ENCODE measurements at regions of chr1 and their contacts with region 1.

Region 1: GRCh38 chr1:28581536-28582247 is 10.4 kb upstream of the RAB42 start:
- H3K4me3 ChIP-seq: peak overlapping the region; percentile 74
- H3K27ac ChIP-seq: peak overlapping the region; percentile 79
- H3K4me1 ChIP-seq: no peaks in the 10 kb centered on the region; the same call in 1 of the 2 replicates
- CTCF ChIP-seq: peak; percentile 81

Region 2: GRCh38 chr1:28248283-28249012 is 333.2 kb before region 1 on chr1:
- CTCF ChIA-PET with region 1: interaction called, 10 read pairs
- POLR2A ChIA-PET with region 1: interaction called, 20 read pairs
- H3K4me3 ChIP-seq: peak overlapping the region; percentile 13
- H3K27ac ChIP-seq: peak overlapping the region; percentile 44
- H3K4me1 ChIP-seq: peaks cover 12% of the 10 kb centered on the region; the same call in 1 of the 2 replicates
- CTCF ChIP-seq: peak; percentile 63

Region 3: GRCh38 chr1:28470146-28470545 is 111.5 kb before region 1 on chr1:
- CTCF ChIA-PET with region 1: interaction called, 3 read pairs
- POLR2A ChIA-PET with region 1: interaction called, 10 read pairs
- H3K4me3 ChIP-seq: no peak overlapping the region
- H3K27ac ChIP-seq: no peak overlapping the region
- H3K4me1 ChIP-seq: no peaks in the 10 kb centered on the region
- CTCF ChIP-seq: no peak

Region 4: DNA sequence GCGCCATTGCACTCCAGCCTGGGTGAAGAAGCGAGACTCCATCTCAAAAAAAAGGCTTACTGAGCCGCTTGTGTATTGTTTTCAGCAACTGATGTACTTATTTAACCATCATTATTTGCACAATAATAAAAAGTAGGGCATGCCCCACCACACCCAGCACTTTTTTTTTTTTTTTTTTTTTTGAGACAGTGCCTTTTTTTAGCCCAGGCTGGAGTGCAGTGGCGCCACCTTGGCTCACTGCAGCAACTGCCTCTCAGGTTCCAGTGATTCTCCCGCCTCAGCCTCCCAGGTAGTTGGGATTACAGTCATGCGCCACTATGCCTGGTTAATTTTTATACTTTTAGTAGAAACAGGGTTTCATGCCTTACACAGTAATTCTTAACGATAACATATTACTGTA is 41.0 kb before region 1 on chr1:
- CTCF ChIA-PET with region 1: interaction called, 5 read pairs
- POLR2A ChIA-PET with region 1: interaction called, 11 read pairs
- H3K4me3 ChIP-seq: no peak overlapping the region
- H3K27ac ChIP-seq: no peak overlapping the region
- H3K4me1 ChIP-seq: no peaks in the 10 kb centered on the region
- CTCF ChIP-seq: no peak

Region 5: GRCh38 chr1:28602536-28603439 is 21.1 kb after region 1 on chr1:
- CTCF ChIA-PET with region 1: interaction called, 25 read pairs
- POLR2A ChIA-PET with region 1: interaction called, 56 read pairs
- H3K4me3 ChIP-seq: no peak overlapping the region
- H3K27ac ChIP-seq: no peak overlapping the region
- H3K4me1 ChIP-seq: peaks cover 5% of the 10 kb centered on the region
- CTCF ChIP-seq: peak; percentile 47

Region 6: GRCh38 chr1:28877132-28877781 is 295.6 kb after region 1 on chr1:
- CTCF ChIA-PET with region 1: interaction called, 9 read pairs
- POLR2A ChIA-PET with region 1: interaction called, 14 read pairs
- H3K4me3 ChIP-seq: no peak overlapping the region
- H3K27ac ChIP-seq: no peak overlapping the region
- H3K4me1 ChIP-seq: no peaks in the 10 kb centered on the region
- CTCF ChIP-seq: peak; percentile 89